Ascending aorta (tissue), 2 donors: ENCODE measurements at regions of chr3 and their contacts with region 1.

Region 1: DNA sequence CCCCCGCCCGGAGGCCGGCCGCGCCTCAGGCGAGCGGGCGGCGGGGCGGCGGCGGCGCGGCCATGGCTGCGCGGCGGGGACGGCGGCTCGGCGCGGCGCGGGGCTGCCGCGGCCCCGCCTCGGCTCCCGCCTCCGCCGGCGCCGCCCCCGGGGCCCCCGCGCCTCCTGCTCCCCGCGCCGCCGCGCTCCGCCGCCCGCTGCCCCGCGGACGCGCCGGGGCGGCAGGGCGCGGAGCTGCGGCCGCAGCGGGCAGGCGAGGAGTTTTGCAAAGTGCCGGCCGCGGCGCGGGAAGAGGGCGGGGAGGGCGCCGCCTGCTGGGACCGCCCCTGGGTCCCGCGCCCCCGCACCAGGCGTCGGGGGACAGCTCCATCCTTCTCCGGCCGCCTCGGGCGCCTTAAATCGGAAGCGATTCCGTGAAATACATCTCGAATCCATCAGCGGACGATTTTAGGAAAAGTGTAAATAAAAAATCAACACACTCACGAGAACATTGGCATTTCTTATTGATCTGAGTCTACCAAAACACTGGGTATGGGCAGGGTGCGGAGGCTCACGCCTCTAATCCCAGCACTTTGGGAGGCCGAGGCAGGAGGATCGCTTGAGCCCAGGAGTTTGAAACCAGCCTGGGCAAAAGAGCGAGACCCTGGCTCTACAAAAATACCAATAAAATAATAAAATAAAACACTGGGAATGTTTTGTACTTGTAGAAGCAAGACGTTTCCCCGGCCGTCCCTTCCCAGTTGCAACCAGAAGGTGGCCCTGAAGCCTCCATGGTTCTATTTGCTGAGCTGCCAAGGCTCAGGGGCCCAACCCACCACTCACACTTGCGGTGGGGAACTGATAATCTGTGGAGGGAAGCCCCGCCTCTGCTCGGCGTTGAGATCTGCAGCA is 136.9 kb downstream of the NUP210 start:
- DNase-seq: no peak
- H3K4me3 ChIP-seq: peak overlapping the region; percentile 61 to 64
- H3K27ac ChIP-seq: no peak overlapping the region
- H3K4me1 ChIP-seq: peaks cover 4 to 6% of the 10 kb centered on the region in 2 donors
- H3K27me3 ChIP-seq: peaks cover 4% of the 10 kb centered on the region
- CTCF ChIP-seq: peak in 1 of 3 experiments; percentile 44

Region 2: DNA sequence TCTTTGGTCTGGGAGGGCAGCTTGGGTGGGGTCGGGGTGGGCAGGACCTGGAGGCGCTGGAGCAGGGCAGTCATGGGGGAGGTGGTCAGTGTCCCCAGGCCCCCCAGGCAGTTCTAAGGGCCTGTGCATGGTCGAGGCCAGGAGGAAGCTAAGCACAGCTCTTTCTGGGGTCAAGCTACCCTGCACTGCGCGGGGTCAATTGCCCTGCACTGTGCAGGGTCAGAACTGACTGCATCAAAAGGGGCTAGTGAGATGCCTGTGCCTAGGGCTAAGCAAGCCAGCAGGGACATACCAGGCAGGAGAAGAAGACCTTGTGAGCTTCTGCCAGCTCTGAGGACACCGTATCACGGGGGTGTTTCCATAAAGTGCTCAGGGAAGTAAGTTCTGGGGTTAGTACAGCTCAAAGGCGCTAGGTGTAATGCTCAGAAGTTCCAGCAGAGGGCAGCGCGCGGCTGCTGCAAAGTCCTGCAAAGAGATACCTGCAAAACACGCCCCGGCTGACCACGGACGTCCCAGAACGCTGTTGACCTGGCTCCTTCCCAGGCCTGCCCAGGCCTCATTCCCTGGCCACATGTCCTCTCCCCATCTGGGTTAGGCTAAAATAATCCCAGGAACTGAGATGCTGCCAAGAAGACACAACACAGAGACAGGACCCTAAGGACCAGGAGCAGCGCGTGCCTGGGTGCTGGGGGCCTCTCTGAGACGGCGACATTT is 191.2 kb before region 1 on chr3:
- intact Hi-C with region 1: loop called (anchors 5 kb)
- DNase-seq: peak in 1 of 2 donors; percentile 90
- H3K4me3 ChIP-seq: peak overlapping the region in 1 of 2 donors; percentile 23
- H3K27ac ChIP-seq: no peak overlapping the region
- H3K4me1 ChIP-seq: no peaks in the 10 kb centered on the region
- H3K27me3 ChIP-seq: no peaks in the 10 kb centered on the region
- CTCF ChIP-seq: peak; percentile 88 to 95 (median 94)

Region 3: DNA sequence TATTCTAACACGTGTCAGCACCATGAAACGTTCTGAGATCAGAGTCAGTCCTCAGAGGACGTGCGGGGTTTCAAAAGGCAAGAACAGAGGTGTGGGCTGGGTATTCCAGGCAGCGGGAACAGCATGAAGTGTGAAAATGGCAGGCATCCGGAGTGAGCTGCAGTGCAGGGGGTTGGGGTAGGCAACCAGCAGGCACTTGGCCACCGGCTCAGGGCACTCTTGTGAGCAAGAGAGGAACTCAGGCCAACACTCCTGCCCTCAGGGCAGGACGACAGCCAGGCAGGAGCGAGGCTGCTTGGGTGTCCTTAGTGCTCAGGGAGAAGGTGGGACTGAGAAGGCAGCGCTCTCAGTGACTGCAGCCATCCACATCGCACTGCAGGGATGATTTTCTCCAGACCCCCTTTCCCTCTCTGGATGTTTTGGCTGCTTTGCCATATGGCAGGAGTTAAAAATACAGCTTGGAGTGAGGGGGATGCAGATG is 14.2 kb before region 1 on chr3:
- intact Hi-C with region 1: no loop called
- DNase-seq: no peak
- H3K4me3 ChIP-seq: no peak overlapping the region
- H3K27ac ChIP-seq: no peak overlapping the region
- H3K4me1 ChIP-seq: no peaks in the 10 kb centered on the region
- H3K27me3 ChIP-seq: no peaks in the 10 kb centered on the region
- CTCF ChIP-seq: no peak

Region 4: DNA sequence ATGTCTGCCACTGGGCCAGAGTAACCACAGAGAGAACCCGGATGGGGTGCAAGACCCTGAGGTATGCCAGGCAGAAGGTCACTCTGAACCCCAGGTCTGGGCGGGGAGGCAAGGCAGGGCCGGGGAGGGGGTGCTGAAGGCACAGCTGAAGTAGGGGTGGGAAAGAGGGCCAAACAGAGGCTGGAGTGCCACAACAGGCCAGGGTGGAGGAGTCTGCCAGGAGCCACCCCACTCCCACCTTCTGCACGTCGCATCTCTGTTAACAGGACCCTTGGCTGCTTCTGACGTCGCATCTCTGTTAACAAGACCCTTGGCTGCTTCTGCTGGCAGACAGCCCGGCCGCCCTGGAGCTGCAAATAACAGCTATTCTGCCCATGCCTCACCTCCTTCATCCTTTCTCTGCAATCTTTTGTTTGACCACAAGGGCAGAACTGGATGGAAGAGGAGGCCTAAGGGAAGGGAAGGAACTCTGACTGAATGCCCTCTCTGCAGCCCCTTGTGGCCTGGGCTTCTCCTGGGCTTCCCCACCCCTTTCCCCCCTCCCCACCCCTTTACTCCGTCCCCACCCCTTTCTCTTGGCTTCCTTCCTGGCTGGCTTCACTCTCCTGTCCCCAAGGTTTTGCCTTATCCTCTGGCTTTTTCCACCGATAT is 245.1 kb after region 1 on chr3:
- intact Hi-C with region 1: no loop called
- DNase-seq: no peak
- H3K4me3 ChIP-seq: no peak overlapping the region
- H3K27ac ChIP-seq: no peak overlapping the region
- H3K4me1 ChIP-seq: no peaks in the 10 kb centered on the region
- H3K27me3 ChIP-seq: no peaks in the 10 kb centered on the region
- CTCF ChIP-seq: no peak